Mammary epithelial cell (primary cell): ENCODE measurements at regions of chr13 and their contacts with region 1.

Region 1: GRCh38 chr13:110485603-110486002 is 75.9 kb downstream of the RAB20 start:
- DNase-seq: no peak
- H3K4me3 ChIP-seq: no peak overlapping the region
- H3K27ac ChIP-seq: no peak overlapping the region
- H3K4me1 ChIP-seq: no peaks in the 10 kb centered on the region
- H3K27me3 ChIP-seq: no peaks in the 10 kb centered on the region
- CTCF ChIP-seq: no peak

Region 2: GRCh38 chr13:110421696-110422385 is 63.8 kb before region 1 on chr13:
- CTCF ChIA-PET with region 1: no interaction called
- dilution Hi-C with region 1: loop called (anchors 5 kb)
- in situ Hi-C with region 1: no loop called
- intact Hi-C with region 1: no loop called
- DNase-seq: no peak
- H3K4me3 ChIP-seq: no peak overlapping the region
- H3K27ac ChIP-seq: no peak overlapping the region
- H3K4me1 ChIP-seq: peaks cover 41% of the 10 kb centered on the region
- H3K27me3 ChIP-seq: no peaks in the 10 kb centered on the region
- CTCF ChIP-seq: no peak

Region 3: GRCh38 chr13:110561344-110562035 is 75.9 kb after region 1 on chr13 and contains the start of gene RAB20:
- CTCF ChIA-PET with region 1: no interaction called
- dilution Hi-C with region 1: loop called (anchors 5 kb)
- in situ Hi-C with region 1: no loop called
- intact Hi-C with region 1: no loop called
- DNase-seq: peak; percentile 76
- H3K4me3 ChIP-seq: peak within 1 kb of the TSS; percentile 78 to 92 (median 90)
- H3K27ac ChIP-seq: peak within 1 kb of the TSS; percentile 77
- H3K4me1 ChIP-seq: peaks cover 13% of the 10 kb centered on the region
- H3K27me3 ChIP-seq: no peaks in the 10 kb centered on the region
- CTCF ChIP-seq: no peak
- total RNA-seq, gene RAB20: 5.5 to 6.1 TPM